SK-N-SH (cell line): ENCODE measurements at regions of chr5 and their contacts with region 1.

Region 1: GRCh38 chr5:150599917-150600499 is 40.5 kb upstream of the SYNPO start:
- DNase-seq: peak; percentile 86
- H3K4me3 ChIP-seq: peak overlapping the region; percentile 38; a peak in 3 of 4 replicates
- H3K27ac ChIP-seq: peak overlapping the region; percentile 85 to 99
- H3K4me1 ChIP-seq: peaks cover 37 to 85% of the 10 kb centered on the region in 2 experiments
- H3K27me3 ChIP-seq: no peaks in the 10 kb centered on the region
- CTCF ChIP-seq: no peak
- EP300 ChIP-seq: peak in 1 of 2 experiments; percentile 21; a peak in 1 of 4 replicates
- RAD21 ChIP-seq: no peak

Region 2: DNA sequence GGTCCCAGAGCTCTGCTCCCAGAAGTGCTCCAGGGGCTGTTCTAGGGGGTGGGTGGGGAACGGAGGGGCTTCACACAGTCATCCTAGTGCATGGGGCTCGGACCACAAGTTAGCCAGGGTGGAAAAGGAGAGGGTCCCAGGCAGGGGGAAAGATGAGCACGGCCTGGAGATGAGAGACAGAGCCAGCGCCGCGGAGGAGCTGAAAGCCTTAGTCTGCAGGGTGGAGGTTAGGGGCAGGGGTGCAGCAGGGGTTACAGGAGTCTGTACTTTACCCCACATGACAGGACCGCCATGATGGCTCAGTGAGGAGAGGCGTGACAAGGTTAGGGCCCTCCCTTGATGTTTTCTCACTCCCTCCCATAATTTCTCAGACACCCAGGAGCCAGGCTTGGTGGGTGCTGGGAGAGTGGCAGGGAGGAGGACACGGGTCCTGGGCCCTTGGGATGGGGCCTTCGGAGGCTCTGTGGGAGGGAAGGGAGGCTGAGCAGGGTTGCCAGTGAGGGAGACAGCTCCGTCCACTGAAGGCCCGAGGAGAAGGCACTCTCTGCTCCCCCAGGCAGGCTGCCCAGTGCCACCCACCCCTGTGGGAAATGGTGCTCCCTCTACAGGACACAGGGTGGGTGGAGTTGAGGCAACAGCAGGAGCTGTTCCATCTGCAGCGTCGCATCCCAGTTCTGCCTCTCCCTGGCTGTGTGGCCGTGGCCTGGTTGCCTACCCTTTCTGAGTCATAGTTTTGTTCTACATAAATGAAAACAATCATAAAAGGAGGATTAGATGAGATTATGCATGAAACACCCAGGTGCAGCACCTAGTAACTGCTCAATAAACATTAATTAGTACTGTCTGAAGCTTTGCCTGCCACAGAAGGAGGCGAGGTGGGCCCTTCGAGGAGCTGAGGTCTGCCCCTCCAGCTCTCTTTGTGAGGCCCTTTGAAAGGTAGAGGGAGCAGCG is 25.9 kb before region 1 on chr5:
- CTCF ChIA-PET with region 1: interaction called, 9 read pairs
- POLR2A ChIA-PET with region 1: interaction called, 15 read pairs
- DNase-seq: peak; percentile 59
- H3K4me3 ChIP-seq: no peak overlapping the region
- H3K27ac ChIP-seq: peak overlapping the region in 1 of 2 experiments; percentile 99; a peak in 2 of 4 replicates
- H3K4me1 ChIP-seq: peaks cover 8 to 61% of the 10 kb centered on the region in 2 experiments; a peak in 3 of 4 replicates
- H3K27me3 ChIP-seq: no peaks in the 10 kb centered on the region
- CTCF ChIP-seq: peak; percentile 30
- EP300 ChIP-seq: no peak
- RAD21 ChIP-seq: no peak

Region 3: GRCh38 chr5:150582241-150583109 is 17.5 kb before region 1 on chr5:
- CTCF ChIA-PET with region 1: interaction called, 11 read pairs
- POLR2A ChIA-PET with region 1: interaction called, 8 read pairs
- DNase-seq: peak; percentile 86
- H3K4me3 ChIP-seq: no peak overlapping the region
- H3K27ac ChIP-seq: peak overlapping the region in 1 of 2 experiments; percentile 93; a peak in 2 of 4 replicates
- H3K4me1 ChIP-seq: peaks cover 0 to 61% of the 10 kb centered on the region in 2 experiments; a peak in 2 of 4 replicates
- H3K27me3 ChIP-seq: no peaks in the 10 kb centered on the region
- CTCF ChIP-seq: no peak
- EP300 ChIP-seq: peak; percentile 45 to 87; a peak in 3 of 4 replicates
- RAD21 ChIP-seq: peak; percentile 46; the same call in 1 of the 2 replicates

Region 4: DNA sequence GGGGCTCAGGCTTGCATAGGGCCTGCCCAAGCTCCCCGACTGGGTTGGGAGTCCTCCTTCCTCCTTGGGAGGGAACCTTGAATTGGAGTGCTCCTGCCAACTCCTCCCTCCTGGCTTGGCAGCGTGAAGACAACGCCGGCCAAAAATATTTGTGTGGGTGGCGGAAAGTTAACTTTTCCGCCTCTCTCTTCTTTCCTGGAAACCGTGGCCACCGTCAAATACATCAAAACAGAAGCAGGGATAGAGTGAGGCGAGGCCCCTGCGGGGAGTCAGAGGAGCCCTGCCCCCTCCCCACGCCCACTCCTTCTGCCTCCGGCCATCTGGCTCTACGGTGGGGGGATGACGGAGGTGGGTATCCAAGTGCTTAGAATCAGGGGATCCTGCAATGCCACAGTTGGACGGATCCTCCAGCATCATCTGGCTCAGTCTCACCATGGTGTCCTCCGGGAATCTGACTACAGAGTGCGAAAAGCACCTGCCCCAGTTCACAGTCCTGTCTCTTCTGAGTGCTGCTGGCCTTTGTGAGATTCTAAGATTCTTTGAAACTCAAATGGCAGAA is 15.2 kb after region 1 on chr5:
- CTCF ChIA-PET with region 1: interaction called, 32 read pairs
- POLR2A ChIA-PET with region 1: interaction called, 14 read pairs
- DNase-seq: no peak
- H3K4me3 ChIP-seq: no peak overlapping the region
- H3K27ac ChIP-seq: peak overlapping the region in 1 of 2 experiments; percentile 86; a peak in 2 of 4 replicates
- H3K4me1 ChIP-seq: peaks cover 0 to 82% of the 10 kb centered on the region in 2 experiments; a peak in 3 of 4 replicates
- H3K27me3 ChIP-seq: no peaks in the 10 kb centered on the region
- CTCF ChIP-seq: no peak
- EP300 ChIP-seq: no peak
- RAD21 ChIP-seq: no peak